CD4-positive, alpha-beta T cell (primary cell): ENCODE measurements at regions of chr10 and their contacts with region 1.

Region 1: DNA sequence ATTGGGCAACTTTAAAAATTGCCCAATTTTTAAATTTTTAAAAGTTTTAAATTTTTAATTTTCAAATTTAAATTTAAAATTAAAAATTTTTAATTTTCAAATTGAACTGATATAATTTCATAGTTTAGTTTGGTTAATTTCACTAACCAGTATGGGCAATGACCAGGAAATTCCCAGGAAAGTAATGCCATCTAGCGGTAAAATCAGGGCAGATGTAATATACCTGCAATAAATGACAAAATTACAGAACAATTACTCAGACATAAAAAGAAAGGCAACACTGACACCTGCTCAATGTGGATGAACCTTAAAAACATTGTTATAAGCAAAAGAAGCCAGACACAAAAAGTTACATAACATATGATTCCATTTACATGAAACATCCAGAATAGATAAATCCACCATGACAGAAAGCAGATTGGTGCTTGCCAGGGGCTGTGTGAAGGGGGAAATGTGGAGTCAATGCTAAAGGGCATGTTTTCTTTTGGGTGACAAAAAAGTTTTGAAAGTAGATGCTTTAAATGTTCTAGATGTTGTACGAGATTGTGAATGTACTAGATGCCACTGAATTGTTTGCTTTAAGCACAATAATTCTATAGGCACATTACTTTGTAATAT is 28.6 kb upstream of the SLC16A12 start:
- DNase-seq: peak in 4 of 14 experiments; percentile 16 to 72 (median 66)
- ATAC-seq: peak; percentile 63
- H3K4me3 ChIP-seq: no peak overlapping the region
- H3K4me3 Mint-ChIP-seq: no peak overlapping the region
- H3K27ac ChIP-seq: no peak overlapping the region
- H3K27ac Mint-ChIP-seq: no peak overlapping the region
- H3K4me1 ChIP-seq: no peaks in the 10 kb centered on the region
- H3K4me1 Mint-ChIP-seq: no peaks in the 10 kb centered on the region
- H3K27me3 ChIP-seq: no peaks in the 10 kb centered on the region
- H3K27me3 Mint-ChIP-seq: peaks cover 12% of the 10 kb centered on the region
- CTCF ChIP-seq: peak; percentile 94

Region 2: DNA sequence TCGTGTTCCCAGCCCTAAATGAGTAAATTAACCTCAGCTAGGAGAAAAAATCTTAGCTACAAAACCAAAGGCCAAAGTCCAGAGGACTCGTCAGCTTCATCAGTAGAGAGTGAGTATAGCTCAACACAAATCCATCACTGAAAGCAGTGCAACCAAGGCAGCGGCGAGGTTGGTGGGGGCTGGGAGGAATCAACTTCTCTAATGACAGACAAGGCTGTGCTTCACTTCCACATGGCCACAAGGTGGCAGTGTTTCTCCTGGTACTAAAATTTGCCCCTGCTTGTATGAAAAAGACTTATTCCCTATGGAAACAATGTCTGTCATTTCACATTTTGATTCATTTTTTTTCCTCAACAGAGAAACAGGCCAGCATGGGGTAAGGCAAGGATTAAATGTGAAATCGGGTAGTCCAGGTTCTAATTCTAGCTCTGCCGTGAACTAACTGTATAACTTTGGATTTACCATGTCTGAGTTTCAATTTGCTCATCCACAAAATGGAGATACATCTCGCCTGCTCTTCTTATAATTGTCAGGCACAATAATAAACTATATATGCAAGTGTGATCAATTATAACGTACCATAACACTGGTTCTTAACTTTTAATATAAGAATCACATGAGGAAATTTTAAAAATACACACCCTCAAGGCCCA is 534.1 kb before region 1 on chr10:
- CTCF ChIA-PET with region 1: no interaction called
- POLR2A ChIA-PET with region 1: no interaction called
- intact Hi-C with region 1: loop called in 1 of 2 experiments (anchors 10 kb)
- DNase-seq: peak; percentile 44 to 84 (median 58)
- ATAC-seq: peak; percentile 80
- H3K4me3 ChIP-seq: no peak overlapping the region
- H3K4me3 Mint-ChIP-seq: no peak overlapping the region
- H3K27ac ChIP-seq: no peak overlapping the region
- H3K27ac Mint-ChIP-seq: no peak overlapping the region
- H3K4me1 ChIP-seq: peaks cover 3% of the 10 kb centered on the region
- H3K4me1 Mint-ChIP-seq: peaks cover 9% of the 10 kb centered on the region
- H3K27me3 ChIP-seq: no peaks in the 10 kb centered on the region
- H3K27me3 Mint-ChIP-seq: no peaks in the 10 kb centered on the region
- CTCF ChIP-seq: peak; percentile 93

Region 3: GRCh38 chr10:89296220-89296648 is 267.7 kb before region 1 on chr10:
- CTCF ChIA-PET with region 1: no interaction called
- POLR2A ChIA-PET with region 1: no interaction called
- intact Hi-C with region 1: loop called in 1 of 2 experiments (anchors 10 kb)
- DNase-seq: peak in 2 of 14 experiments; percentile 42 to 46
- ATAC-seq: no peak
- H3K4me3 ChIP-seq: no peak overlapping the region
- H3K4me3 Mint-ChIP-seq: no peak overlapping the region
- H3K27ac ChIP-seq: no peak overlapping the region
- H3K27ac Mint-ChIP-seq: no peak overlapping the region
- H3K4me1 ChIP-seq: no peaks in the 10 kb centered on the region
- H3K4me1 Mint-ChIP-seq: peaks cover 30% of the 10 kb centered on the region
- H3K27me3 ChIP-seq: no peaks in the 10 kb centered on the region
- H3K27me3 Mint-ChIP-seq: no peaks in the 10 kb centered on the region
- CTCF ChIP-seq: no peak

Region 4: GRCh38 chr10:89369156-89370105 is 194.5 kb before region 1 on chr10:
- CTCF ChIA-PET with region 1: no interaction called
- POLR2A ChIA-PET with region 1: no interaction called
- intact Hi-C with region 1: loop called in 1 of 2 experiments (anchors 5 kb)
- DNase-seq: peak in 5 of 14 experiments; percentile 8 to 55 (median 39)
- ATAC-seq: peak; percentile 46
- H3K4me3 ChIP-seq: no peak overlapping the region
- H3K4me3 Mint-ChIP-seq: no peak overlapping the region
- H3K27ac ChIP-seq: no peak overlapping the region
- H3K27ac Mint-ChIP-seq: no peak overlapping the region
- H3K4me1 ChIP-seq: peaks cover 7% of the 10 kb centered on the region
- H3K4me1 Mint-ChIP-seq: peaks cover 7% of the 10 kb centered on the region
- H3K27me3 ChIP-seq: no peaks in the 10 kb centered on the region
- H3K27me3 Mint-ChIP-seq: no peaks in the 10 kb centered on the region
- CTCF ChIP-seq: peak; percentile 58

Region 5: DNA sequence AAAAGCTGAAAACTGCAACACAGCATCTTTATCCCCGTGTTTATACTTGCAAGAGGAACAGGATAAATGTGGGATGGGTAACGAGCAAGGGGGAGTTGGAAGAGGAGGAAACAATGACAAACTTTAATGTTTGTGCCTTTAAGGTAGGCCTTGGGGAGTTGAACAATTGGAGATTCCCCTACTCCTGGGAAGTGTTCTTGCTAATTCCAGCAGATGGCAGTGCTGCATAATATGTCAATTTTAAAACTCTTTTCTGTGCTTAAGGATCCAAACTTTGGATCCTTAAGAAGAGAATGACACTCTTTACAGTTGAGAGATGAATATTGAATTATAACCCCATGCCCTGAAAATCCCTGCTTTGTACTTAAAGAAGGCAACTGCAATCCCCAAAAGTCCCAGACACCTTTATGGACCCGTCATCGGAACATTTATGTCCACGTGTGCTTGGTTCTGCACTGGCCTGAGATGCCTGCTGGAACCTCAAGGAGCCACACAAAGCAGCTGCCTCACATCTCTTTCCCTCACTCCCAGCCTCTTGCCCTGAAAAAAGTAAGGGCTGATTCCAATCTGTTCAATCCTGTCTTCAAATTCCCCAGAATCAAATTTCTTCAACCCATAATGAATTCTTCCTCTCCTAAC is 137.6 kb before region 1 on chr10:
- CTCF ChIA-PET with region 1: no interaction called
- POLR2A ChIA-PET with region 1: interaction called, 4 read pairs
- intact Hi-C with region 1: loop called (anchors 2 kb)
- DNase-seq: peak in 4 of 14 experiments; percentile 15 to 62 (median 52)
- ATAC-seq: peak; percentile 71
- H3K4me3 ChIP-seq: no peak overlapping the region
- H3K4me3 Mint-ChIP-seq: no peak overlapping the region
- H3K27ac ChIP-seq: no peak overlapping the region
- H3K27ac Mint-ChIP-seq: no peak overlapping the region
- H3K4me1 ChIP-seq: no peaks in the 10 kb centered on the region
- H3K4me1 Mint-ChIP-seq: peaks cover 6% of the 10 kb centered on the region
- H3K27me3 ChIP-seq: peaks cover 0 to 6% of the 10 kb centered on the region in 2 experiments
- H3K27me3 Mint-ChIP-seq: no peaks in the 10 kb centered on the region
- CTCF ChIP-seq: peak; percentile 72

Region 6: DNA sequence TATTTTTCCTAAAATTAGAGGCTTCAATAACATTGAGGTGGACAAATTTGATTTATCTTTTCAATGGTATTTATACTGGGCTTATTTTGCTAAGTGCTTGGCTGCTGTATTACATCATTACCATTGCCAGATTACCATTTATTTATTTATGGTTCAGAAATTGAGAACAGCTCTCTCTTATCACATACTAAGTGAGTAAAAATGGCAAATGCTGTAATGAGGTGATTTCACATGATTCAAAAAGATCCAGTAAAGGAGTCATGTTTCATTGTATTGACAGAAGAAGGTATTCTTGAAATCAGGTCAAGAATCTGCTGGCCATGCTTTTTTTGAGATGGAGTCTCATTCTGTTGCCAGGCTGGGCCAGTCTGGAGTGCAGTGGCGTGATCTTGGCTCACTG is 460.0 kb after region 1 on chr10:
- CTCF ChIA-PET with region 1: no interaction called
- POLR2A ChIA-PET with region 1: no interaction called
- intact Hi-C with region 1: no loop called
- DNase-seq: no peak
- ATAC-seq: no peak
- H3K4me3 ChIP-seq: no peak overlapping the region
- H3K4me3 Mint-ChIP-seq: no peak overlapping the region
- H3K27ac ChIP-seq: no peak overlapping the region
- H3K27ac Mint-ChIP-seq: no peak overlapping the region
- H3K4me1 ChIP-seq: no peaks in the 10 kb centered on the region
- H3K4me1 Mint-ChIP-seq: no peaks in the 10 kb centered on the region
- H3K27me3 ChIP-seq: no peaks in the 10 kb centered on the region
- H3K27me3 Mint-ChIP-seq: no peaks in the 10 kb centered on the region
- CTCF ChIP-seq: no peak